Astrocyte of the cerebellum (primary cell): ENCODE measurements at regions of chr20 and their contacts with region 1.

Region 1: DNA sequence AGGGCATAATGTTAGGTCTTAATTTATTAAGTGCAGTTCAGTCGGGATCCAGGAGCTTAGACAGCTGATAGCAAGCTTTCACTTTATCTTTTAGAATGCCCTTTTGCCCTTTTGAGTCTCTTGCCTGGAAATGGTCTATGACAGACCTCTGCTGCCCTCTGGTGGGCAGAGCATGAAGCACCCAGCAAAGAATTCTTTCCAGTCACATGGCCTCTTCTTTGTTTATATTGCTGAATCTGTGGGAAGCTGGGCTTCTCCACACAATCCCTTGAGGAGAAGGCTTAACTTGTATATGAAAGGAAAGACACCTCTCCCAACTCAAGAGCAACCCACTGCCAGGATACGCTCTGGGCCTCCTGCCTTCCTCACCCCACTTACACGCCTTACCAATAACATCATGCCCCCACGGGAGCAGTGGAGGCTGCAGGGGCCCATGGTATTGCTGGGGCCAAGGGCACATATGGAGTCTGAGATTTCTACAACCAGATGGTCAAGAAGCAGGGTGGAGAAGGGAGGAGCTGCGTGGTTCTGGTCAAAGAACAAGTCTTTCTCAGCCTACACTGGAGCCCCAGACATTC is 20.4 kb downstream of the WFDC3 start:
- DNase-seq: peak; percentile 49
- H3K4me3 ChIP-seq: no peak overlapping the region
- CTCF ChIP-seq: peak; percentile 94

Region 2: DNA sequence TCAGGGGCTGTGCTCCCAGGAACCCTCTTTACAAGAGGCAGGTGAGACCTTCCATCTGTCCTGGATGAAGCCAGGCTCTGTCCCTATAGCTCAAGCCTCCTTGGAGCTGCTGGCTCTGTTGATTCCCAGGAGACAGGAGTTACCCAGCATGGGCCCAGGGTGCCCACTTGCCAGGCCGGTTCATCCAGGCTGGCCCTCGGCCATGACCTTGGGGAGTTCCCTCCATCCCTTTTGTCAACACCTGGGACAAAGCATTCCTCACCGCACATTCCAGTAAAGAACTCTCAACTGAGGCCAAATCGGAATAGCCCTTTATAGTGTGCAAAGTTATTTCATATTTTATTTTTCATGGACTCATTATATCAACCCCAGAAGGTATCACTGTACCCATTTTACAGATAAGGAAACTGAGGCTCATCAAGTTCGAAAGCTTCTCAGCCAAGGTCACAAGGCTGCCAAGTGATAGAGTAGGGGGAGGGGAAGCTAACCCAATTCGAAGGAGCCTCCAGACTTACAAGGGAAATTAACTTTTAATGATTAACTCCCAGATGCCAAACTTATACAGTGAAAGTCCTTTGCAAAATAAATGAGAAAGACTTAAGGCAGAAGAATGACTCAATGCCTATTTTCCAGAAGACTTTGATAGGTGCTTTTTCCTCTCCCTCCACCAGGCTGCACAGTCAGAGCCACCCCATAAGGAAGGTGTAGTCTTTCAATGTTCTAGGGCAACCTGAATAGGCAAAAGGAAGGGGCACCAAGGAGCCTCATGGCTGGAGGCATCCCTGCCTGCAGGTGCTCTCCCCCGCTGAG is 441.6 kb before region 1 on chr20:
- in situ Hi-C with region 1: loop called (anchors 5 kb)
- DNase-seq: no peak
- H3K4me3 ChIP-seq: no peak overlapping the region
- CTCF ChIP-seq: no peak

Region 3: DNA sequence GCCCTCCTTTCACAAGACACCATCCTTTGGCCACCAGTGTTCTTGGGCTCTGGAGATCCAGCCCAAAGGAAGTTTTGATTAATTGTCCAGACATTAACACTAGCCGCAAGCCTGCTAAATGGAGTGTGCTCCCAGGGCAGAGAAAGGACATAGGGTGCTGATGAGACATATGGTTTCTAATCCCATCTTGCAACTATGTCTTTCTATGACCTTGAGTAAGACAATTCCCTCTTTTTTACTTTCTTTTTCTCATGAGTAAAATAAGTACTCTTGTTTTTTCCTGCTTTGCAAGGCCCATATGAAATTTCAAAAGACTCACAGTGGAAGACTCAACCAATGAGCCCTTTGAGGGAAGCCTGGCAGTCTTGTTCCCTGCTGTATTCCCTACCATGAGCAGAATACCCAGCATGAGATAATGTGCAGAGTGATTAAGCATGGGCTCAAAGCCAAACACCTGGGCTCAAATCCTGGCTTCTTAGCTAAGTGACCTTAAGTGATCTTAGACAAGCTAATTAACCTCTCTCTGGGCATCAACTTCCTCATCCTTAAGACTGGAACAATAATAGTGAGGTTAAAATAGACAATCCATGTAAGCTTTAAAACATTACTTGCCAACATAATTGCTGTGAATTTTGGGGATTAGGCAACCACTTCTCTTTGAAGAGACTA is 66.2 kb before region 1 on chr20 and contains the start of gene WFDC10B:
- in situ Hi-C with region 1: no loop called
- DNase-seq: no peak
- H3K4me3 ChIP-seq: no peak within 1 kb of the TSS
- CTCF ChIP-seq: no peak